Ascending aorta (tissue), 2 donors: ENCODE measurements at regions of chr17 and their contacts with region 1.

Region 1: DNA sequence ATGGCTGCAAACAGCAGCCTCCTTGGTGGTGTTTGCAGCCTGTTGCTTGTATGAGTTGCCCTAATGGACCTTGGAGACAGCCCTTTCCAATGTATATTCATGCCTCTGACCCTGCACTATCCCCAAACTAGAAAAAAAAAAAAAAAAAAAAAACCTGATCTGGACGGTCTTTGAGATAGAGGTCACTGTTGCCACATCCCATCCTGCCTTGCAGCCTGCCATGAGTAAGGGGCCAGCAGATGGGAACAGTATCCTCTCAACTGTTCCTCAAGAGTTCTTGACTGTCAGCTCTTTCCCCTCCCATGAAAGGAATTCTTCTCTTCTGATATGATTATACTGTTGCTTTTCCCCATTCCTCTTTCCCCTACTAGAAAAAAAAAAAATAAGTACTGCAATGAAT is 152.4 kb downstream of the SSH2 start:
- DNase-seq: no peak
- H3K4me3 ChIP-seq: no peak overlapping the region
- H3K27ac ChIP-seq: no peak overlapping the region
- H3K4me1 ChIP-seq: peaks cover 0 to 4% of the 10 kb centered on the region in 2 donors
- H3K27me3 ChIP-seq: no peaks in the 10 kb centered on the region
- CTCF ChIP-seq: no peak

Region 2: DNA sequence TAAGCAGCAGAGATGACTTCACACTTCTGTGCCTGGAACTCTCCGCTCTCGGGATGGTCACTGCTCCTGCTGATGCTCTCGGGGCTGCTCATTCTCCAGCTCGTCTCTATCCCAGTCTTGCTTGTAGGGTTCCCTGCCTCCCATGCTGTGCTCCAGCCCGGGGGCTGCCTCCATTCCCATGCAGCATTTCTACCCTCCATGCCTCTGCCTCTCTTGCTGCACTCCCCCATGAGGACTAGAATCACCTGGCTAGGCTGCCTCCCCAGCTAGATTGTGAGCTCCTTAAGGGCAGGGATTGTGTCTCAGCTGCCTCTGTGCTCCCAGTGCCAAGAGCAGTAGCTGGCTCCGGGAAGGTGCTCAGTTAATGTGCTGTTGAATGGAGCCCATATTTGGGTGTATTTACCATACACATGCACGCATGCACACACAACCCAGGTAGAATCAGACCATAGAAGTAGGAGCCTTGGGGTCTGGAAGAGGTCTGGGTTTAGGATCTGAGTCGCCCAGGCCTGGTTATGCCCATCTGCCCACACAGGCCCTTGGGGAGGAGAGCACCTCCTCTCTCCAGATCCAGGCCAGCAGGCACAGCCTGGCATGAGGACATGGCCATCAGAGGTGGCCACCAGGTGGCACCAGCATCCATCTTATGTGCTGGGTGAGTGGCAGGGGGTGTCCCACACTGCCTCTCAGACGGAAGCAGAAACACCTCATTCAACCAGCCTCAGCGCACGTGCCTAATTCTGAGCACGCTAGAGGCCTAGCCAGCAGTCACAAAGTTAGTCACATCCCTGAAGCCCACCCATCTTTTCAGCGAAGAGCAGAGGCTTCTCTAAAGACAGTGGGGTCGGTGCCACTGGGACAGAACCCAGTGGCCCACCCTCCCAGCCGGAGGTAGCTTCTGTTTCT is 197.5 kb before region 1 on chr17:
- intact Hi-C with region 1: loop called (anchors 1 kb)
- DNase-seq: peak in 1 of 2 donors; percentile 91
- H3K4me3 ChIP-seq: no peak overlapping the region
- H3K27ac ChIP-seq: no peak overlapping the region
- H3K4me1 ChIP-seq: peaks cover 4 to 7% of the 10 kb centered on the region in 2 donors
- H3K27me3 ChIP-seq: no peaks in the 10 kb centered on the region
- CTCF ChIP-seq: peak; percentile 88 to 93 (median 88)

Region 3: GRCh38 chr17:29617125-29617480 is 160.6 kb before region 1 on chr17:
- intact Hi-C with region 1: loop called (anchors 2 kb)
- DNase-seq: peak; percentile 54 to 90
- H3K4me3 ChIP-seq: peak overlapping the region; percentile 27 to 62
- H3K27ac ChIP-seq: no peak overlapping the region
- H3K4me1 ChIP-seq: peaks cover 18 to 38% of the 10 kb centered on the region in 2 donors
- H3K27me3 ChIP-seq: no peaks in the 10 kb centered on the region
- CTCF ChIP-seq: peak; percentile 64 to 72 (median 67)

Region 4: GRCh38 chr17:29640413-29640812 is 137.2 kb before region 1 on chr17:
- intact Hi-C with region 1: loop called (anchors 1 kb)
- DNase-seq: no peak
- H3K4me3 ChIP-seq: no peak overlapping the region
- H3K27ac ChIP-seq: peak overlapping the region; percentile 41 to 45
- H3K4me1 ChIP-seq: peaks cover 7 to 44% of the 10 kb centered on the region in 2 donors
- H3K27me3 ChIP-seq: no peaks in the 10 kb centered on the region
- CTCF ChIP-seq: no peak